ENCODE measurements at regions of chr11 and their contacts with region 1.

Region 1: GRCh38 chr11:134785660-134786284 is 373.7 kb upstream of the B3GAT1 start:
- DNase-seq: no peak
- ATAC-seq: no peak
- H3K4me3 ChIP-seq: no peak overlapping the region
- H3K27ac ChIP-seq: no peak overlapping the region
- H3K4me1 ChIP-seq: no peaks in the 10 kb centered on the region
- H3K27me3 ChIP-seq: no peaks in the 10 kb centered on the region
- CTCF ChIP-seq: no peak
- POLR2A ChIP-seq: no peak
- RAD21 ChIP-seq: no peak

Region 2: DNA sequence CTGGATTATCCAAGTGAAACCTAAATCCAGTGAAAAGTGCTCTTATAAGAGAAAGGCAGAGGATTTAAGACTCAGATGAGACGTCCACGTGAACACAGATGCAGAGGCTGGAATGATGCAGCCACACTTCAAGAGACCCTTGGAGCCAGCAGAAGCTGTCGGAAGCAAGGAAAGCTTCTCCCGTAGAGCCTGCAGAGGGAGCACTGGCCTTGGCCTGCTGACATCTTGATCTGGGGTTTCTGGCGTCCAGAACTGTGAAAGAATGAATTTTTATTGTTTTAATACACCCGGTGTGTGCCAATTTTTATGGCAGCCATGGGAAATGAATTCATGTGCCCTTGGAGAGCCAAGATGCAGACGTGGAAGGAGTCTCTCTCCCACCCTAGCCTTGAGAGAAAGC is 33.3 kb after region 1 on chr11:
- CTCF ChIA-PET with region 1: no interaction called
- POLR2A ChIA-PET with region 1: no interaction called
- dilution Hi-C with region 1: no loop called
- in situ Hi-C with region 1: no loop called
- intact Hi-C with region 1: loop called (anchors 2 kb)
- DNase-seq: no peak
- ATAC-seq: no peak
- H3K4me3 ChIP-seq: no peak overlapping the region
- H3K27ac ChIP-seq: no peak overlapping the region
- H3K4me1 ChIP-seq: no peaks in the 10 kb centered on the region
- H3K27me3 ChIP-seq: no peaks in the 10 kb centered on the region
- CTCF ChIP-seq: no peak
- POLR2A ChIP-seq: no peak
- RAD21 ChIP-seq: no peak